CD14-positive monocyte (primary cell): ENCODE measurements at regions of chr5 and their contacts with region 1.

Region 1: GRCh38 chr5:59390074-59390659 is 503.4 kb downstream of the PDE4D start:
- DNase-seq: peak; percentile 2 to 18 (median 12)
- H3K4me3 ChIP-seq: no peak overlapping the region
- H3K4me3 Mint-ChIP-seq: no peak overlapping the region
- H3K27ac ChIP-seq: no peak overlapping the region
- H3K27ac Mint-ChIP-seq: no peak overlapping the region
- H3K4me1 ChIP-seq: no peaks in the 10 kb centered on the region
- H3K4me1 Mint-ChIP-seq: no peaks in the 10 kb centered on the region
- H3K27me3 ChIP-seq: no peaks in the 10 kb centered on the region
- H3K27me3 Mint-ChIP-seq: no peaks in the 10 kb centered on the region
- CTCF ChIP-seq: peak; percentile 92

Region 2: DNA sequence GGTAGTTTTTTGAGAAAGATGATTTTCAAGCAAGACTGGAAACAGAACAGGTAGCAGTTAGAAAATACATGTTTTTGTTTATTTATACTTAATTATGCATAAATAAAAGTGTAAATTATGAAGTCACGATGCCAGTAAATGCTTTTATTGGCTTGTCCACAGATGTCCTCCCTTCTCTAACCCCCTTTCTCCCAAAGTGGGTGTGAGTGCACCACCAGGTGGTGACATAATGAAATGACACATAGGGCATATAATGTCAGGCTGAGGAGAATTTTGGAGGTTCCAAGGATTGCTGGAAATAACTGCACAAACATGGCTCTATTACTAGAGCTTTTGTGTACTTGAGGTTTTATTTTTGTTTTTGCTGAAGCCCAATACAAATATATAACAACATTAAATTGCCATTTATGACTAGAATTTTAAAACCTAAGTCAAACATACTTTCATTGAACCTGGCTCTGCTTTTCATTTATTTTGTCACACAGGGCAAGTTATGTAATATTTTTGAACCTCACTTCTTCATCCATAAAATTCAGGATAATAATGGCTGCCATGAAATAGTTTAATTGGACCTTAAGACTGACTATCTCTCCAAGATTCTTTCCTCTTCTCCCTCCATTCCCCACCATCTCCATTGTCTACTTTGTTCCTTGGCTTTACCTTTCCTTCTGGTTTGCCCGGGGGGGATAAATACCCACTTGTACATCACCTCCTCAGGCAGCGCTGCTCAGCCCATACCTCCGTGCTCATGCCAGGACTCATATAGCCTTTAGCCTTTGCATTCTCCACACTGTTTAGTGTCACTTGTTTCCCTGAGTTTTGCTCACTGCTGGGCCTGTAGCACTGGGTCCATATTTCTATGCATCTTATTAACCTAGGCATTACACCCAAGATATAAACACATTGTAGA is 334.6 kb after region 1 on chr5:
- intact Hi-C with region 1: no loop called
- DNase-seq: peak in 1 of 3 donors; percentile 2
- H3K4me3 ChIP-seq: no peak overlapping the region
- H3K4me3 Mint-ChIP-seq: no peak overlapping the region
- H3K27ac ChIP-seq: no peak overlapping the region
- H3K27ac Mint-ChIP-seq: no peak overlapping the region
- H3K4me1 ChIP-seq: no peaks in the 10 kb centered on the region
- H3K4me1 Mint-ChIP-seq: no peaks in the 10 kb centered on the region
- H3K27me3 ChIP-seq: no peaks in the 10 kb centered on the region
- H3K27me3 Mint-ChIP-seq: no peaks in the 10 kb centered on the region
- CTCF ChIP-seq: peak; percentile 66

Region 3: GRCh38 chr5:59799668-59800346 is 409.6 kb after region 1 on chr5:
- intact Hi-C with region 1: loop called (anchors 5 kb)
- DNase-seq: peak; percentile 29 to 65 (median 47)
- H3K4me3 ChIP-seq: no peak overlapping the region
- H3K4me3 Mint-ChIP-seq: no peak overlapping the region
- H3K27ac ChIP-seq: no peak overlapping the region
- H3K27ac Mint-ChIP-seq: no peak overlapping the region
- H3K4me1 ChIP-seq: no peaks in the 10 kb centered on the region
- H3K4me1 Mint-ChIP-seq: peaks cover 4% of the 10 kb centered on the region
- H3K27me3 ChIP-seq: no peaks in the 10 kb centered on the region
- H3K27me3 Mint-ChIP-seq: no peaks in the 10 kb centered on the region
- CTCF ChIP-seq: peak; percentile 88